ENCODE measurements at regions of chr11 and their contacts with region 1.

Region 1: GRCh38 chr11:8338138-8338537 is 74.5 kb upstream of the LMO1 start:
- DNase-seq: no peak
- ATAC-seq: no peak
- H3K4me3 Mint-ChIP-seq: no peak overlapping the region
- H3K27ac Mint-ChIP-seq: no peak overlapping the region
- H3K4me1 Mint-ChIP-seq: peaks cover 18% of the 10 kb centered on the region
- H3K27me3 Mint-ChIP-seq: no peaks in the 10 kb centered on the region
- CTCF ChIP-seq: no peak

Region 2: DNA sequence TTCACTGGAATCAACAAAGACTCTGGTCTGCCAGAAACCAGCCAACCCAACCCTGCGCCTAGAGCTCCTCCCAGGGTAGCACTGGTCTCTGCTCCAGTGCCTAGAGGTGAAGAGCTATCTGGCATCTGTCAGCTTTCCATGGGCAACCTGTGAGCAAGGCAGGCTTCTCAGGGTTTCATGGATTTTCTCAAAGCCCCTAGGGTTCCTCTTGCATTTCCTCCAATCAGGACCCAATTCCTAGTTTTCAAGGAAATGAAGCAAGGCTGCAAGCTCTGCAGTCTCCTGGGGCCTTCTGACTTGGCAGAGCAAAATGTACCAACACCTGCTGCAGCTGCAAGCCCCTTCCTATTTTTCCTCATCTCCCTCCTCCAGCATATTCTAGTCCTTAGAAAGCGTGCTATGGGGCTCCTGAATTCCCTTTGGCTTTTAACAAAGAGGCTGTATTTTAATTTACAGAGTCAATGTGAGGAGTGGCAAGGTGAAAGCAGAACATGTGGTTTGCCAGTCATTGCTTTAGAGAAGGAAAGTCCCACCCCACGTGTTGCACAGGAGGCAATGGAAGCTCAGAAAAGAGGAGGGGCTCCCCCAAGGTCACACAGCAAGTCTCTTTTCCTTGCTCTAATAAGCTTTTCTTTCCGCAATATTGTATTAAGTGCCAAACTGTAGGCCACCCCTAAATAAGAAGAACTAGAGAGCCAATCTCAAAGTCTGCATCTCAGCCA is 136.3 kb before region 1 on chr11:
- CTCF ChIA-PET with region 1: no interaction called
- POLR2A ChIA-PET with region 1: no interaction called
- intact Hi-C with region 1: loop called (anchors 2 kb)
- DNase-seq: peak; percentile 36
- ATAC-seq: peak; percentile 85
- H3K4me3 Mint-ChIP-seq: peak overlapping the region; percentile 16
- H3K27ac Mint-ChIP-seq: peak overlapping the region; percentile 87
- H3K4me1 Mint-ChIP-seq: peaks cover 74% of the 10 kb centered on the region
- H3K27me3 Mint-ChIP-seq: no peaks in the 10 kb centered on the region
- CTCF ChIP-seq: no peak

Region 3: DNA sequence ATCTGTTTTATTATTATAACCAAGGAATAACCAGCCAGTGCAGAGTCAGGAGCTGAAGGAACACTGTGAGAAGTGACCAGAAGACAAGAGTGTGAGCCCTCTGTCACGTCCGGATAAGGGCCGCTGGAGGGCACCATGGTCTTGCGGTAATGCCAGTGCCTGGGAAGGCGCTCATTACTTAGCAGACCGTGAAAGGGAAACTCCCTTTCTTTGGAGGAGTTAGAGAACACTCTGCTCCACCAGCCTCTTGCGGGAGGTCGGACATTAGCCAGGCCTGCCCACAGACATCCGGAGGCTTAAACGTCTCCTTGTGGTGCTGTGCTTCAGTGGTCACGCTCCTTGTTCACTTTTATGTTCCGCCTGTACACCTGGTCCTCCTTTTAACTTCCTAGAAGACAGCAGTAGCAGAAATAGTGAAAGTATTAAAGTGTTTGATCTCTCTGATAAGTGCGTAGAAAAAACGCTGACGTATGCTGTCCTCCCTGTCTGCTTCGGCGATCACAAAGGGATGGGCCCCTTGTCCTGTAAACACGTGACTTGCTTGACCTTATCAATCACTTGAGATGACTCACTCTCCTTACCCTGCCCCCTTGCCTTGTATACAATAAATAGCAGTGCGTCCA is 46.2 kb after region 1 on chr11:
- CTCF ChIA-PET with region 1: no interaction called
- POLR2A ChIA-PET with region 1: no interaction called
- intact Hi-C with region 1: loop called (anchors 5 kb)
- DNase-seq: no peak
- ATAC-seq: peak; percentile 73
- H3K4me3 Mint-ChIP-seq: peak overlapping the region; percentile 46
- H3K27ac Mint-ChIP-seq: peak overlapping the region; percentile 57
- H3K4me1 Mint-ChIP-seq: peaks cover 13% of the 10 kb centered on the region
- H3K27me3 Mint-ChIP-seq: no peaks in the 10 kb centered on the region
- CTCF ChIP-seq: no peak

Region 4: GRCh38 chr11:8533332-8533731 is 195.2 kb after region 1 on chr11:
- CTCF ChIA-PET with region 1: no interaction called
- POLR2A ChIA-PET with region 1: interaction called, 6 read pairs
- intact Hi-C with region 1: loop called (anchors 1 kb)
- DNase-seq: no peak
- ATAC-seq: peak; percentile 84
- H3K4me3 Mint-ChIP-seq: peak overlapping the region; percentile 76
- H3K27ac Mint-ChIP-seq: peak overlapping the region; percentile 90
- H3K4me1 Mint-ChIP-seq: peaks cover 52% of the 10 kb centered on the region
- H3K27me3 Mint-ChIP-seq: no peaks in the 10 kb centered on the region
- CTCF ChIP-seq: no peak

Region 5: GRCh38 chr11:8717876-8718753 is 380.0 kb after region 1 on chr11:
- CTCF ChIA-PET with region 1: no interaction called
- POLR2A ChIA-PET with region 1: no interaction called
- intact Hi-C with region 1: no loop called
- DNase-seq: peak; percentile 24
- ATAC-seq: peak; percentile 96
- H3K4me3 Mint-ChIP-seq: peak overlapping the region; percentile 68
- H3K27ac Mint-ChIP-seq: peak overlapping the region; percentile 64
- H3K4me1 Mint-ChIP-seq: peaks cover 19% of the 10 kb centered on the region
- H3K27me3 Mint-ChIP-seq: peaks cover 10% of the 10 kb centered on the region
- CTCF ChIP-seq: no peak

Region 6: DNA sequence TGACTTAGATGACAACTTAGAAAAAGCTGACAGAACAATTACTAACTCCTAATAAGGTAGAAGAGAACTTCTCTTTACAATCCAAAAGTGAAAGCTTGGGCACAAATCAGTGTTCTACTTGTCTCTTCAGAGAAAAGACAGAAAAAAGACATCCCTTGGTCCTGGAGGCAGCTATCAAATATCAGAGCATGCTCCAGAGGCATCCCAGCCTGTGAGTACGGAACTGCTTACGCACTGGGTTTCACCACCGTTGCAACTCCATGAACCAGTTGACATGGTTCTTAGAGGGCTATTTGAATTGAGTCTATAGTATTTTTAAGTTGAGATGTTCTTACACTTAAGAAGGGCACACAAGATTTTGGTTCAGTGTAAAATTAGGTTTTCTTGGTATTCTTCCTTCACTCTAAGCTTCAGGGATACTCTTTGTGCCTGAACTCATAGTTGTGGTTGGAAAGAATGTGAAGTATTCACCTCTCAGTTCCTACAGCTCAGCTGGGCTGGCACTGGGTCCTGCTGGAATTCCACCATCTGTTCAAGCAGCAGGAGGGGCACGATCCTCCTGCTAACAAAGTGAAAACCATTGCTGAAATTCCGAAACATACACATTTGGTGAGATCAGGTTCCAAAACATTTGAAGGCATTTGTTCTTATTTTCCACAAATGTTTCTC is 579.2 kb after region 1 on chr11:
- CTCF ChIA-PET with region 1: no interaction called
- POLR2A ChIA-PET with region 1: no interaction called
- intact Hi-C with region 1: no loop called
- DNase-seq: no peak
- ATAC-seq: no peak
- H3K4me3 Mint-ChIP-seq: no peak overlapping the region
- H3K27ac Mint-ChIP-seq: no peak overlapping the region
- H3K4me1 Mint-ChIP-seq: peaks cover 18% of the 10 kb centered on the region
- H3K27me3 Mint-ChIP-seq: no peaks in the 10 kb centered on the region
- CTCF ChIP-seq: no peak